WTC11 (cell line): ENCODE measurements at regions of chr22 and their contacts with region 1.

Region 1: GRCh38 chr22:46006379-46007002 is 29.5 kb upstream of the WNT7B start:
- DNase-seq: peak; percentile 92
- ATAC-seq: peak; percentile 84
- H3K4me3 Mint-ChIP-seq: no peak overlapping the region
- H3K27ac Mint-ChIP-seq: peak overlapping the region; percentile 45
- H3K4me1 Mint-ChIP-seq: no peaks in the 10 kb centered on the region; the same call in 1 of the 2 replicates
- H3K27me3 Mint-ChIP-seq: no peaks in the 10 kb centered on the region
- CTCF ChIP-seq: peak; percentile 89

Region 2: DNA sequence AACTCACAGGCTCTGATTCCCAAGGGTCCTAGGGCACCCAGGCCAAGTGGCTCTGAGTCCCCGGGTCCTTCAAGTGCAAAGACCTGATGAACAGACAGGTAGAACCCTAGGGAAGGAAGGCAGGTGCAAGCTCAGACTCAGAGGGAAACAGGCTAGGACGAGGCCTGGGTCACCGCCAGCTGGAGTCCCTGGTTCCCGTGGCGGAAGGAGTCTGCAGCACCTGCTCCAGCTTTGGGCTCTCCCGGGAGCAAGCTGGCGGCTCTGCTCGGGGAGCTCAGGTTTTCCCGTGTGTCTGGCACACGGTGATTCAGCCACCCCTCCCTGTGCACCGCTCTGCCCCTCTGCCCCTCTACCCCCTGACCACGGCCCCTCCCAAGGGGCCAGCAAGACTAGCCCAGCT is 89.3 kb before region 1 on chr22:
- CTCF ChIA-PET with region 1: no interaction called
- POLR2A ChIA-PET with region 1: no interaction called
- DNase-seq: no peak
- ATAC-seq: no peak
- H3K4me3 Mint-ChIP-seq: no peak overlapping the region
- H3K27ac Mint-ChIP-seq: no peak overlapping the region
- H3K4me1 Mint-ChIP-seq: no peaks in the 10 kb centered on the region
- H3K27me3 Mint-ChIP-seq: no peaks in the 10 kb centered on the region; the same call in 1 of the 2 replicates
- CTCF ChIP-seq: no peak

Region 3: GRCh38 chr22:45994491-45995404 is 11.7 kb before region 1 on chr22:
- CTCF ChIA-PET with region 1: interaction called, 148 read pairs
- POLR2A ChIA-PET with region 1: no interaction called
- DNase-seq: peak; percentile 95
- ATAC-seq: peak; percentile 89
- H3K4me3 Mint-ChIP-seq: no peak overlapping the region
- H3K27ac Mint-ChIP-seq: no peak overlapping the region
- H3K4me1 Mint-ChIP-seq: peaks cover 2% of the 10 kb centered on the region; the same call in 1 of the 2 replicates
- H3K27me3 Mint-ChIP-seq: no peaks in the 10 kb centered on the region; the same call in 1 of the 2 replicates
- CTCF ChIP-seq: peak; percentile 96

Region 4: GRCh38 chr22:46044621-46045438 is 38.3 kb after region 1 on chr22:
- CTCF ChIA-PET with region 1: interaction called, 56 read pairs
- POLR2A ChIA-PET with region 1: no interaction called
- DNase-seq: peak; percentile 56
- ATAC-seq: peak; percentile 68
- H3K4me3 Mint-ChIP-seq: peak overlapping the region; percentile 64
- H3K27ac Mint-ChIP-seq: no peak overlapping the region
- H3K4me1 Mint-ChIP-seq: peaks cover 14% of the 10 kb centered on the region
- H3K27me3 Mint-ChIP-seq: peaks cover 36% of the 10 kb centered on the region
- CTCF ChIP-seq: no peak

Region 5: GRCh38 chr22:46079861-46080821 is 73.7 kb after region 1 on chr22:
- CTCF ChIA-PET with region 1: interaction called, 27 read pairs
- POLR2A ChIA-PET with region 1: interaction called, 5 read pairs
- DNase-seq: peak; percentile 9
- ATAC-seq: no peak
- H3K4me3 Mint-ChIP-seq: no peak overlapping the region
- H3K27ac Mint-ChIP-seq: no peak overlapping the region
- H3K4me1 Mint-ChIP-seq: peaks cover 30% of the 10 kb centered on the region
- H3K27me3 Mint-ChIP-seq: no peaks in the 10 kb centered on the region
- CTCF ChIP-seq: no peak

Region 6: GRCh38 chr22:46116491-46116958 is 110.0 kb after region 1 on chr22:
- CTCF ChIA-PET with region 1: interaction called, 179 read pairs
- POLR2A ChIA-PET with region 1: no interaction called
- DNase-seq: peak; percentile 94
- ATAC-seq: peak; percentile 86
- H3K4me3 Mint-ChIP-seq: no peak overlapping the region
- H3K27ac Mint-ChIP-seq: no peak overlapping the region
- H3K4me1 Mint-ChIP-seq: peaks cover 3% of the 10 kb centered on the region; the same call in 1 of the 2 replicates
- H3K27me3 Mint-ChIP-seq: no peaks in the 10 kb centered on the region
- CTCF ChIP-seq: peak; percentile 49; the same call in 1 of the 2 replicates

Region 7: GRCh38 chr22:46180370-46181137 is 174.1 kb after region 1 on chr22:
- CTCF ChIA-PET with region 1: no interaction called
- POLR2A ChIA-PET with region 1: no interaction called
- DNase-seq: no peak
- ATAC-seq: no peak
- H3K4me3 Mint-ChIP-seq: no peak overlapping the region
- H3K27ac Mint-ChIP-seq: no peak overlapping the region
- H3K4me1 Mint-ChIP-seq: no peaks in the 10 kb centered on the region
- H3K27me3 Mint-ChIP-seq: peaks cover 4% of the 10 kb centered on the region
- CTCF ChIP-seq: no peak